HEK293 (cell line): ENCODE measurements at regions of chr19 and their contacts with region 1.

Region 1: GRCh38 chr19:32570081-32570785 is 10.8 kb upstream of the PDCD5 start:
- H3K4me3 ChIP-seq: no peak overlapping the region
- H3K27ac ChIP-seq: no peak overlapping the region
- H3K4me1 ChIP-seq: peaks cover 2% of the 10 kb centered on the region; the same call in 1 of the 2 replicates
- CTCF ChIP-seq: peak; percentile 98

Region 2: DNA sequence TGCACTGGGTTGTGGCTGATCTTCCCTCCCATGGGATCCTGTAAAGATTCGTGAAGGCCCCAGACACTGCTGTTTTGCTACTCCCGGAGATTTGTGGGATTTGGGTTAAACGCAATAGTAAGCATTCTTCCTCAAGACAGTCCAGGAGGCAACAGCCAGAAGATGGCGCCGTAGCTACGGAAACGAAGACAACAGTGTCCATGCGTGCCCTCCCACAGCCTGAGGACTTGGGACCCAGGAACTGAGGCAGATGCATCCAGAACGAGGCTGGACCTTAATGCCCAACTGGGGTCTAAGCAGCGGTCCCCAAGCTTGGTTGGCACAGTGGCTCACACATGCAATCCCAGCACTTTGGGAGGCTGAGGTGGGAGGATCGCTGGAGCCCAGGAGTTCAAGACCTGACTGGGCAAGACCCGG is 282.4 kb before region 1 on chr19:
- CTCF ChIA-PET with region 1: interaction called, 60 read pairs
- POLR2A ChIA-PET with region 1: no interaction called
- H3K4me3 ChIP-seq: no peak overlapping the region
- H3K27ac ChIP-seq: no peak overlapping the region
- H3K4me1 ChIP-seq: peaks cover 3% of the 10 kb centered on the region; the same call in 1 of the 2 replicates
- CTCF ChIP-seq: peak; percentile 93

Region 3: DNA sequence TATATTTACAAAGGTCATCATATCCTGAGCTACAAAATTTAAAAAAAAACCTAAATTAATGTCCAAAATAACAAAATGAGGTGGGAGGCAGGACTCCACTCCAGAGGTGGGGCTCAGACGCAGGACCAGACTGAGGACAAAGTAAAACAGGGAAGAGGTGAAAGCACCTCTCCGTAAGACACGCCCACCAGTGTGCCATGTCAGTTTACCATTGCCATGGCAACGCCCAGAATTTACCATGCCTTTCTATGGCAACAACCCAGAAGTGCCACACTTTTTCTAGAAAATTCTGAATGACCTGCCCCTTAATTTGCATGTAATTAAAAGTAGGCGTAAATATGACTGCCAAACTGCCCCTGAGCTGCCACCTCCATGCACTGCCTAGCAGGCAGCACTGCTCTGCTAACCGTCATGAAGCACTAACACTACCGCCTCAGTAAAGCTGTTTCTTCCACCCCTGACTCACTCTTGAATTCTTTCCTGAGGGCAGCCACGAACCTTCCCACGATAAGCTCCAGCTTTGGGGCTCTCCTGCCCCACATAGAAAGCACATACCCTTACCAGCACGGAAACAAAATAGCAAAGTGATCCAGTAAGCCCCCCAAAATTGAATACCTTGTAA is 11.5 kb before region 1 on chr19:
- CTCF ChIA-PET with region 1: interaction called, 16 read pairs
- POLR2A ChIA-PET with region 1: no interaction called
- H3K4me3 ChIP-seq: no peak overlapping the region
- H3K27ac ChIP-seq: no peak overlapping the region
- H3K4me1 ChIP-seq: no peaks in the 10 kb centered on the region
- CTCF ChIP-seq: no peak